ENCODE measurements at regions of chr17 and their contacts with region 1.

Region 1: GRCh38 chr17:57916925-57917858 is 38.0 kb downstream of the CUEDC1 start:
- DNase-seq: peak; percentile 39
- ATAC-seq: peak; percentile 7; the same call in 1 of the 2 replicates
- H3K4me3 ChIP-seq: no peak overlapping the region
- H3K27ac ChIP-seq: peak overlapping the region; percentile 86
- H3K4me1 ChIP-seq: peaks cover 52% of the 10 kb centered on the region
- H3K27me3 ChIP-seq: no peaks in the 10 kb centered on the region
- CTCF ChIP-seq: peak; percentile 55; the same call in 1 of the 2 replicates

Region 2: GRCh38 chr17:56913864-56914640 is 1003.1 kb before region 1 on chr17 and contains the start of gene TRIM25:
- CTCF ChIA-PET with region 1: no interaction called
- POLR2A ChIA-PET with region 1: interaction called, 15 read pairs
- intact Hi-C with region 1: no loop called
- DNase-seq: peak; percentile 92
- ATAC-seq: peak; percentile 67
- H3K4me3 ChIP-seq: peak within 1 kb of the TSS; percentile 87
- H3K27ac ChIP-seq: peak within 1 kb of the TSS; percentile 94
- H3K4me1 ChIP-seq: peaks cover 45% of the 10 kb centered on the region
- H3K27me3 ChIP-seq: no peaks in the 10 kb centered on the region
- CTCF ChIP-seq: no peak
- total RNA-seq, gene TRIM25: 44.0 and 60.2 TPM in 2 replicates

Region 3: DNA sequence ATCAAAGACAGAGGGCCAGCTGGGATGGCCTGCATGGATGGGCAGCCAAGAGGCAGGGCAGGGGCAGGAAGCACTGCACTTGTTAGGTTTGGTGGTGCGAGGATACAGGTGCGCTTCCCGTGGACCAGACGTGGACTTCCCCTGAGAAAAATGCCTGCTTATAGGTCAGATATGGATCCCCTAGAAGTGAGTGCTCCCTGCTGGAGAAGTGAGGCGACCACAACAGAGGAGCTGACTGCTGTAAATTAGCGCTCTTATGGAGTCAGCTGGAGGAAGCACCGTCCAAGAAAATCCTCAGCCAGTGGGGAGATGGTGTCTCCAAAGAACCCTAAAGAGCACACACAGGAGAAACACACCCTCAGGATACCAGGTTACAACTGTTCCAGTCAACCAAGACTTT is 144.4 kb before region 1 on chr17:
- CTCF ChIA-PET with region 1: no interaction called
- POLR2A ChIA-PET with region 1: no interaction called
- intact Hi-C with region 1: no loop called
- DNase-seq: no peak
- ATAC-seq: no peak
- H3K4me3 ChIP-seq: no peak overlapping the region
- H3K27ac ChIP-seq: no peak overlapping the region
- H3K4me1 ChIP-seq: no peaks in the 10 kb centered on the region
- H3K27me3 ChIP-seq: peaks cover 59% of the 10 kb centered on the region
- CTCF ChIP-seq: no peak; the same call in 1 of the 2 replicates

Region 4: DNA sequence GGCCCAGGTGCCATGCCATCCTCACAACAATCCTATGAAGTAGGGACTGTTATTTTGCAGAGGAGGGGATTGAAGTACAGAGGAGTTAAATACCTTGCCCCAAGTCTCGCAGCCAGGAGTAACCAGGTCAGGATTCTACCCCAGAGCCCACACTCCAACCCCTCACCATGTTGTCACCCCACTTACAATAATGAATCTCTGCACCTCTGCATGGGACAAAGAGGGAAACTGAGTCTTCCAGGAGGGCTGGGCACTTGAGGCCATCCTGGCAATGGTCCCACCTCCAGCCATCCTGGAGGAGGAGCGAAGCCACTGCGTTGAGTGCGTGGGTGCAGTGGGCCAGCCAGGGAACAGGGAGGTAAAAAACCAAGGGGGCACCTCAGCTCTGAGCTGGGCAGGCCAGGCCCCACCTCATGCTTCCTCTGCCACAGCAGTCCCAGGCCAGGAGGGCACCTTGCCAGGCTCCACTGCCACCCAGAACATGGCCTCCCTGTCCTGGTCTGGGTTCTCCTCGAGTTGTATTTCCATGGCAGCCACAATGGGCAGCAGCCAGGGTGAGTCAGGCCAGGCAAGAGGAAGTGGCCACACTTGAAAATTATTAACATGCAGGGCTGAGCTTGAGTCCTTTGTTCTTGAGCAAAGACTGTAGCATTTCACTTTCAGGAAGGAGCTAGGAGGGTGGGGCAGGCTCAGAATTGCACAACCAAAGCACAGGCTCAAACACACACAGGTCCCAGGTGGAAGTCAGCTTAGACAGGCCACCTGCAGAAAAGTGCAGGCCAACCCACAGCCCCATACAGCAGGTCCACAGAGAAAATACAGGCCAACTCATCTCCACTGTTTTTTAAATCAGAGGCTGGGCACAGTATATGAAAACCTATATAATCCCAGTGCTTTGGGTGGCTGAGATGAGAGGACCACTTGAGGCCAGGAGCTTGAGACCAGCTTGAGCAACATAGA is 14.1 kb before region 1 on chr17:
- CTCF ChIA-PET with region 1: no interaction called
- POLR2A ChIA-PET with region 1: interaction called, 5 read pairs
- intact Hi-C with region 1: loop called (anchors 1 kb)
- DNase-seq: peak; percentile 98
- ATAC-seq: peak; percentile 82
- H3K4me3 ChIP-seq: no peak overlapping the region
- H3K27ac ChIP-seq: peak overlapping the region; percentile 96
- H3K4me1 ChIP-seq: peaks cover 64% of the 10 kb centered on the region
- H3K27me3 ChIP-seq: no peaks in the 10 kb centered on the region
- CTCF ChIP-seq: no peak